H1 (cell line): ENCODE measurements at regions of chr19 and their contacts with region 1.

Region 1: DNA sequence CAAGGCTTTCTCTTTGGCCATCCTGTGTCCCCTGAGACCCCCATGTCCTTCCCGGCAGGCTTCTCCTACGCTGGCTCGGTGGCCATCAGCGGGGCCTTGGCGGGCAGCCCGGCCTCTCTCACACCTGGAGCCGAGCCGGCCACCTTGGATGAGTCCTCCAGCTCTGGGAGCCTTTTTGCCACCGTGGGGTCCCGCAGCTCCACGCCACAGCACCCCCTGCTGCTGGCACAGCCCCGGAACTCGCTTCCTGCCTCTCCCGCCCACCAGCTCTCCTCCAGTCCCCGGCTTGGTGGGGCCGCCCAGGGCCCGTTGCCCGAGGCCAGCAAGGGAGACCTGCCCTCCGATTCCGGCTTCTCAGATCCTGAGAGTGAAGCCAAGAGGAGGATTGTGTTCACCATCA is 14.2 kb downstream of the PLEKHJ1 start:
- DNase-seq: no peak
- H3K4me3 ChIP-seq: no peak overlapping the region
- H3K27ac ChIP-seq: no peak overlapping the region
- H3K4me1 ChIP-seq: no peaks in the 10 kb centered on the region
- H3K27me3 ChIP-seq: no peaks in the 10 kb centered on the region
- CTCF ChIP-seq: peak in 1 of 3 experiments; percentile 3; a peak in 1 of 4 replicates
- EP300 ChIP-seq: no peak
- POLR2A ChIP-seq: no peak
- RAD21 ChIP-seq: peak in 1 of 2 experiments; percentile 15; a peak in 1 of 4 replicates

Region 2: GRCh38 chr19:1905071-1905862 is 316.7 kb before region 1 on chr19 and contains the starts of genes ADAT3 and SCAMP4:
- CTCF ChIA-PET with region 1: no interaction called
- POLR2A ChIA-PET with region 1: no interaction called
- DNase-seq: peak; percentile 94 to 95
- H3K4me3 ChIP-seq: peak within 1 kb of the TSS; percentile 51 to 71 (median 58)
- H3K27ac ChIP-seq: peak within 1 kb of the TSS; percentile 87
- H3K4me1 ChIP-seq: peaks cover 0 to 9% (median 8%) of the 10 kb centered on the region in 4 experiments; a peak in 5 of 7 replicates
- H3K27me3 ChIP-seq: no peaks in the 10 kb centered on the region
- CTCF ChIP-seq: no peak
- EP300 ChIP-seq: peak in 1 of 2 experiments; percentile 62; a peak in 1 of 3 replicates
- POLR2A ChIP-seq: peak in 1 of 2 experiments; percentile 82; a peak in 1 of 3 replicates
- RAD21 ChIP-seq: no peak
- total RNA-seq, gene ADAT3: 10.2 and 10.8 TPM in 2 replicates
- total RNA-seq, gene SCAMP4: 61.4 and 65.7 TPM in 2 replicates

Region 3: GRCh38 chr19:2253106-2254053 is 31.5 kb after region 1 on chr19:
- CTCF ChIA-PET with region 1: interaction called, 10 read pairs
- POLR2A ChIA-PET with region 1: interaction called, 61 read pairs
- DNase-seq: peak in 1 of 2 experiments; percentile 84
- H3K4me3 ChIP-seq: peak overlapping the region; percentile 35 to 65 (median 47)
- H3K27ac ChIP-seq: no peak overlapping the region
- H3K4me1 ChIP-seq: peaks cover 0 to 4% (median 2%) of the 10 kb centered on the region in 4 experiments; a peak in 5 of 7 replicates
- H3K27me3 ChIP-seq: peaks cover 0 to 23% (median 12%) of the 10 kb centered on the region in 4 experiments; a peak in 6 of 7 replicates
- CTCF ChIP-seq: peak; percentile 50 to 59 (median 54)
- EP300 ChIP-seq: no peak
- POLR2A ChIP-seq: no peak
- RAD21 ChIP-seq: peak; percentile 30 to 50; a peak in 3 of 4 replicates